ENCODE measurements at regions of chr22 and their contacts with region 1.

Region 1: GRCh38 chr22:33418484-33418883 is 360.3 kb upstream of the SYN3 start:
- DNase-seq: no peak
- H3K4me3 Mint-ChIP-seq: no peak overlapping the region
- H3K27ac Mint-ChIP-seq: no peak overlapping the region
- H3K4me1 Mint-ChIP-seq: no peaks in the 10 kb centered on the region
- H3K27me3 Mint-ChIP-seq: no peaks in the 10 kb centered on the region

Region 2: DNA sequence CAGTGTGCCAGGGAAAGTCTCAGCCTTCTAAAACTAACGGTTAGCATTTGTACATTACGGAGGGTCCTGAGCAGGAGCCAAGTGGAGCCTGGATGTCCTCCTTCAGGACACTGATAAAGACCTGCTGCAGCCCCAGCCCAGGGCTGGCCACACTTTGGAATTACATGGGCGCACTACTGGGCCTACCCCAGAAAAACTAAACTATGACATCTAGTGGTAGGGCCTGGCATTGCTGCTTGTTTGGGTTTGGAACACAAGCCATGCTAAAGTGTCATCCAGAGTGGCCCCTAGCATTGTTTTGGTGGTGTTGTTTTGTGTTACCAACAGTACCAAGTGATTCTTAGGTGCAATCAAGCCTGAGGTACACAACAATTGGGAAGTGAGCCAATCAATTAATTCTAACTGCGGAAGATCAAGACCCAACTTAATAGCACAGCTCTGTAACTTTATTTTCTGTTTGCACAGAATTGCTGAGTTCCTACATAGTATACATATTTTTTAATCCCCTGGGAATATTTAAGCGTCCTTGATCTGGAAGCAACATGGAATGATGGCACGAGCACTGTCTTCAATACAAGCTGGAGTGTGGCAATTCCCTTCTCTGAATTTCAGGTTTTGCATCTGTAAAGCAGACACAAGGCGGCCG is 161.1 kb after region 1 on chr22:
- intact Hi-C with region 1: no loop called
- DNase-seq: peak; percentile 13
- H3K4me3 Mint-ChIP-seq: no peak overlapping the region
- H3K27ac Mint-ChIP-seq: no peak overlapping the region
- H3K4me1 Mint-ChIP-seq: no peaks in the 10 kb centered on the region
- H3K27me3 Mint-ChIP-seq: no peaks in the 10 kb centered on the region

Region 3: DNA sequence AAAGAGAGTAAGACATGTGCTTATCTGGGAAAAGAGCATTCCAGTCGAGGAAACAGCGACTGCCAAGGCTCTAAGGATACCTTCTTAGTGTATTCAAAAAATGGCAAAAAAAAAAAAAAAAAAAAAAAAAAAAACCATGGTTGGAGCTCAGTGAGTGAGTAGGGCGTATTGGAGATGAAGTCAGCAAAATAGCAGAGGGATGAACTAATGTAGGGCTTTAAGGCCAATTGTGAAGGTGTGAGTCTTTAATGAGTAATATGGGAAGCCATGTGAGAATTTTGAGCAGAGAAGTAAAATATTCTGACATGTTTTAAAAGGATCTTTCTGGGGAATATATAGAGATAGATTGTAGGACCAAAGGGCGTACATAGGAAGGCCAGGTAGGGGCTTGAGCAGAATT is 1148.9 kb after region 1 on chr22:
- intact Hi-C with region 1: loop called (anchors 10 kb)
- DNase-seq: no peak
- H3K4me3 Mint-ChIP-seq: no peak overlapping the region
- H3K27ac Mint-ChIP-seq: no peak overlapping the region
- H3K4me1 Mint-ChIP-seq: no peaks in the 10 kb centered on the region
- H3K27me3 Mint-ChIP-seq: no peaks in the 10 kb centered on the region

Measured in activated T-helper 1 cell treated with anti-CD3 and anti-CD28 coated beads, Interleukin-12 subunit alpha, Interleukin-12 subunit beta, Interleukin-2, Interleukin-4 antibody, amounts not matched to agents 30 ng/mL and 10 ng/mL and 1 ng/mL, durations not matched to agents 14 hours and 24 hours and 36 hours (primary cell).